Activated naive CD4-positive, alpha-beta T cell treated with anti-CD3 and anti-CD28 coated beads for 36 hours (primary cell): ENCODE measurements at regions of chr9 and their contacts with region 1.

Region 1: GRCh38 chr9:69919461-69920061 is 98.9 kb downstream of the CFAP95 start:
- DNase-seq: no peak
- H3K4me3 Mint-ChIP-seq: no peak overlapping the region
- H3K27ac Mint-ChIP-seq: no peak overlapping the region
- H3K4me1 Mint-ChIP-seq: no peaks in the 10 kb centered on the region
- H3K27me3 Mint-ChIP-seq: peaks cover 21% of the 10 kb centered on the region

Region 2: GRCh38 chr9:69502671-69503301 is 416.8 kb before region 1 on chr9:
- CTCF ChIA-PET with region 1: no interaction called
- intact Hi-C with region 1: no loop called
- DNase-seq: no peak
- H3K4me3 Mint-ChIP-seq: no peak overlapping the region
- H3K27ac Mint-ChIP-seq: no peak overlapping the region
- H3K4me1 Mint-ChIP-seq: no peaks in the 10 kb centered on the region
- H3K27me3 Mint-ChIP-seq: no peaks in the 10 kb centered on the region

Region 3: GRCh38 chr9:69672596-69673310 is 246.8 kb before region 1 on chr9:
- CTCF ChIA-PET with region 1: interaction called, 5 read pairs
- intact Hi-C with region 1: loop called (anchors 1 kb)
- DNase-seq: peak; percentile 81
- H3K4me3 Mint-ChIP-seq: peak overlapping the region; percentile 72
- H3K27ac Mint-ChIP-seq: no peak overlapping the region
- H3K4me1 Mint-ChIP-seq: peaks cover 9% of the 10 kb centered on the region
- H3K27me3 Mint-ChIP-seq: peaks cover 12% of the 10 kb centered on the region

Region 4: DNA sequence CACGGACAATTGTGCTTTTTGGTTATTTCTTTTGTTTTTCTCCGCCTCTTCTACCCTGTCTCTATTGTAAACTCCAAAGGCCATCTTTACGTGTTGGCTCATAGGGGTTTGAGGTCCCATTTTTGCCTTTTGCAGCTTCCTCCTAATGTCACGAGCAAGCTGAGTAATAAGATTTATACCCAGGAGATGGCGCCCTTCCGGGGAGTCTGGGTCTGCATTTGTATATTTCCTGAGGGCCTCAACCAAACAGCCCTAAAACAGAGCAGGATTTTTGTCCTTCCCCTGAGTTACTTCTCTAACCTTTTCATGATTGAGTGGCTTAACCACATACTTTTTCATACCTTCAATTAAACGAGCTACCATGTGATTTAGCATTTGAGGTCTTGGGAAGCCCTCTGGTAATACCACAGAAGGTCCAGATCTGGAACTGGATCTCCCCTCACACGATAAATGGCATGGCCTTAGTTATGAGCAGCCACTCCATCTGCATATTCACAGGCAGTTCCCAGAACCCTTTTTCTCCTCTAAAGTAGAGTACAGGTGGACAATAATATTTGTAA is 110.2 kb before region 1 on chr9:
- CTCF ChIA-PET with region 1: interaction called, 3 read pairs
- intact Hi-C with region 1: loop called (anchors 1 kb)
- DNase-seq: peak; percentile 52
- H3K4me3 Mint-ChIP-seq: no peak overlapping the region
- H3K27ac Mint-ChIP-seq: no peak overlapping the region
- H3K4me1 Mint-ChIP-seq: no peaks in the 10 kb centered on the region
- H3K27me3 Mint-ChIP-seq: peaks cover under 1% of the 10 kb centered on the region

Region 5: DNA sequence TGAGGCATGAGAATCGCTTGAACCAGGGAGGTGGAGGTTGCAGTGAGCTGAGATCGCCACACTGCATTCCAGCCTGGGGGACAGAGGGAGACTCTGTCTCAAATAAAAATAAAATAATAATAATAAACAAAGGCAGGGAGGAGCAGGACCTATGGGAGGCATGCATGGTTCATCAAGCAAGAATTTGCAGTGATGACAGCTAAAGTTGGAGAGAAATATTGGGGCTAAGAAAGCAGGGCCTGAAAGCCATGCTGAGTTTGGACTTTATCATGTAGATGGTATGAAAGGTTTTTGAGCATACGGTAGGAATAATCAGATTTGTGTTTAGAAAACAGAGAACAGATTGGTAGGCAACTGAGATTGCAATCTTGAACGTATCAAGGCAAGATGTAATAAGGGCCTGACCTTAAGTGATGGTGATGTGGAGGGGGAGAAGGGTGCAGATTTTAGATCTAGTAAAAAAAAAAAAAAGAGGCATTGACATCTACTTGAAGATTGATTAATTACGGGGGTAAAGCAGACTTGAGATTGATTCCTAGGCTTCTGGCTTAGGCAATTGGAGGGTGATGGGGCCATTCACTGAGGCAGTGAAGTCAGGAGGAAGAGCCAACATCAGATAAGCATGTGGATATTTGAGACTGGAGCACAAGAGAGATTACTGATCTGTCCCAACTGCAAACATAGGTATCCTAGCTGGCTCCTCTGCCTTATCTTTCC is 48.3 kb before region 1 on chr9:
- CTCF ChIA-PET with region 1: no interaction called
- intact Hi-C with region 1: no loop called
- DNase-seq: no peak
- H3K4me3 Mint-ChIP-seq: no peak overlapping the region
- H3K27ac Mint-ChIP-seq: no peak overlapping the region
- H3K4me1 Mint-ChIP-seq: no peaks in the 10 kb centered on the region
- H3K27me3 Mint-ChIP-seq: no peaks in the 10 kb centered on the region